Naive thymus-derived CD4-positive, alpha-beta T cell (primary cell): ENCODE measurements at regions of chr20 and their contacts with region 1.

Region 1: GRCh38 chr20:37534401-37535157 is 6.9 kb upstream of the BLCAP start:
- DNase-seq: peak in 7 of 9 donors; percentile 37 to 63 (median 55)
- ATAC-seq: peak; percentile 96
- H3K4me3 ChIP-seq: no peak overlapping the region
- H3K4me3 Mint-ChIP-seq: no peak overlapping the region
- H3K27ac ChIP-seq: no peak overlapping the region
- H3K27ac Mint-ChIP-seq: peak overlapping the region in 1 of 9 donors; percentile 5
- H3K4me1 ChIP-seq: no peaks in the 10 kb centered on the region
- H3K4me1 Mint-ChIP-seq: peaks cover 0 to 6% (median 0%) of the 10 kb centered on the region in 7 donors
- H3K27me3 ChIP-seq: no peaks in the 10 kb centered on the region
- H3K27me3 Mint-ChIP-seq: peaks cover 0 to 9% (median 6%) of the 10 kb centered on the region in 5 donors

Region 2: DNA sequence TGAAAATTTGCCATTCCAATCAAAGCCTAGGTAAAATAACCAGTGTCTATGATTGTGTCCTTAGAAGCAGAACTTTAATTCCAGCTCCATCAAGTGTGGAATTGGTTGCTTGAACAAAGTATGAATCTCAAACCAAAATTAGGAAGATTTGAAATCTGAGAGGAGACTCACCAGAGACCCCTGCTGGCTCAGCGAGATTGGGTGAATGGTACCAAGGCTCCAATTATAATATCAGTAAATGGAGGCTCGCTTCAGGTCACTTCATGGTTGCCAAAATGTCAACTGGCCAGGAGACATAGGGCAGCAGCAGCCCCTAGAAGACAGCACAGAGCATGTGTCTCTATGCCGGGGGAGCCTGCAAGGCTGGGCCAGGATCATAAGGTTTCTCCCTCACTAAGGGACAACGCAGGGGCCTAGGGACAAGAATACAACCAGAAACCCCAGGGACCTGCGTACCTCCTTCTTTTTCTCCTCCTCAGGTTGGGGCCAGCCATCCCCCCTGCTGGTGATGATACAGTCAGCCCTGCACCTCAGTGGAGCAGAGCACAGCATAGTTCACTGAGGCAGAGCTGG is 452.8 kb before region 1 on chr20:
- CTCF ChIA-PET with region 1: no interaction called
- POLR2A ChIA-PET with region 1: no interaction called
- intact Hi-C with region 1: loop called in 1 of 2 experiments (anchors 5 kb)
- DNase-seq: peak in 7 of 9 donors; percentile 21 to 64 (median 54)
- ATAC-seq: peak; percentile 61
- H3K4me3 ChIP-seq: no peak overlapping the region
- H3K4me3 Mint-ChIP-seq: peak overlapping the region in 3 of 10 donors; percentile 5 to 42 (median 17)
- H3K27ac ChIP-seq: no peak overlapping the region
- H3K27ac Mint-ChIP-seq: peak overlapping the region; percentile 62 to 89 (median 82)
- H3K4me1 ChIP-seq: peaks cover 12% of the 10 kb centered on the region in 2 donors
- H3K4me1 Mint-ChIP-seq: peaks cover 2 to 37% (median 29%) of the 10 kb centered on the region in 7 donors
- H3K27me3 ChIP-seq: no peaks in the 10 kb centered on the region
- H3K27me3 Mint-ChIP-seq: no peaks in the 10 kb centered on the region

Region 3: GRCh38 chr20:37192137-37192854 is 342.3 kb before region 1 on chr20:
- CTCF ChIA-PET with region 1: interaction called, 42 read pairs
- POLR2A ChIA-PET with region 1: interaction called, 8 read pairs
- intact Hi-C with region 1: loop called (anchors 1 kb)
- DNase-seq: peak; percentile 31 to 71 (median 60)
- ATAC-seq: peak; percentile 89
- H3K4me3 ChIP-seq: no peak overlapping the region
- H3K4me3 Mint-ChIP-seq: peak overlapping the region in 3 of 10 donors; percentile 7 to 44 (median 13)
- H3K27ac ChIP-seq: no peak overlapping the region
- H3K27ac Mint-ChIP-seq: peak overlapping the region in 8 of 9 donors; percentile 36 to 94 (median 66)
- H3K4me1 ChIP-seq: peaks cover 36 to 46% of the 10 kb centered on the region in 2 donors
- H3K4me1 Mint-ChIP-seq: peaks cover 64 to 84% (median 80%) of the 10 kb centered on the region in 7 donors
- H3K27me3 ChIP-seq: no peaks in the 10 kb centered on the region
- H3K27me3 Mint-ChIP-seq: no peaks in the 10 kb centered on the region

Region 4: DNA sequence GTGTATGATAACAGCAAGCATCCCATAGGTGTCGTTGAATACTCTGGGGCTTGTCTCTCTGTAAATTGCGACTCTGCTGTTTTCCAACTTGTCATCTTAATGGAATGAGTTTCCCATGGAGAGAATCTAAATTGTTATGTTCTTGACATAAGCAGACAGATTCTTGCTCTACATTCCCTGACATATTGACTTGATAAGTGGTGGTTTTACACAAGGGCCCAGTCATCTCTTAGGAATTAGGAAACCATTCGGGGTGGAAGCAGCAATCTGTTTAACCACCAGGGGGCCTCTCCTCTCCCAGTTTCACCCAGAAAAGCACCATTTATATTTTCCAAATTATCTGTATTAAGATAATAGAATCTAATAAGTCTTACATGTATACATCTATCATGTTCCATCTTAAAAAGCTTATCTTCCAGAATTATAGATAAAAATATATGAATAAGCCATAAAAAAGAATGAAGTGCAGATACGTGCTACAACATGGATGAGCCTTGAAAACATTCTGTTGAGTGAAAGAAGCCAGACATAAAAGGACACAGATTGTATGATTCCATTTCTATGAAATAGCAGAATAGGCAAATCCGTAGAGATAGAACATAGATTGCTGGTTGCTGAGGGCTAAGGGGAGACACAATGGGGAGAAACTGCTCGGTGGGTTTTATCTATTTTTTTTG is 332.2 kb before region 1 on chr20:
- CTCF ChIA-PET with region 1: interaction called, 35 read pairs
- POLR2A ChIA-PET with region 1: interaction called, 3 read pairs
- intact Hi-C with region 1: loop called (anchors 1 kb)
- DNase-seq: peak in 4 of 9 donors; percentile 8 to 22 (median 19)
- ATAC-seq: no peak
- H3K4me3 ChIP-seq: no peak overlapping the region
- H3K4me3 Mint-ChIP-seq: no peak overlapping the region
- H3K27ac ChIP-seq: no peak overlapping the region
- H3K27ac Mint-ChIP-seq: peak overlapping the region in 1 of 9 donors; percentile 66
- H3K4me1 ChIP-seq: no peaks in the 10 kb centered on the region
- H3K4me1 Mint-ChIP-seq: peaks cover under 1 to 19% (median 12%) of the 10 kb centered on the region in 7 donors
- H3K27me3 ChIP-seq: no peaks in the 10 kb centered on the region
- H3K27me3 Mint-ChIP-seq: no peaks in the 10 kb centered on the region

Region 5: DNA sequence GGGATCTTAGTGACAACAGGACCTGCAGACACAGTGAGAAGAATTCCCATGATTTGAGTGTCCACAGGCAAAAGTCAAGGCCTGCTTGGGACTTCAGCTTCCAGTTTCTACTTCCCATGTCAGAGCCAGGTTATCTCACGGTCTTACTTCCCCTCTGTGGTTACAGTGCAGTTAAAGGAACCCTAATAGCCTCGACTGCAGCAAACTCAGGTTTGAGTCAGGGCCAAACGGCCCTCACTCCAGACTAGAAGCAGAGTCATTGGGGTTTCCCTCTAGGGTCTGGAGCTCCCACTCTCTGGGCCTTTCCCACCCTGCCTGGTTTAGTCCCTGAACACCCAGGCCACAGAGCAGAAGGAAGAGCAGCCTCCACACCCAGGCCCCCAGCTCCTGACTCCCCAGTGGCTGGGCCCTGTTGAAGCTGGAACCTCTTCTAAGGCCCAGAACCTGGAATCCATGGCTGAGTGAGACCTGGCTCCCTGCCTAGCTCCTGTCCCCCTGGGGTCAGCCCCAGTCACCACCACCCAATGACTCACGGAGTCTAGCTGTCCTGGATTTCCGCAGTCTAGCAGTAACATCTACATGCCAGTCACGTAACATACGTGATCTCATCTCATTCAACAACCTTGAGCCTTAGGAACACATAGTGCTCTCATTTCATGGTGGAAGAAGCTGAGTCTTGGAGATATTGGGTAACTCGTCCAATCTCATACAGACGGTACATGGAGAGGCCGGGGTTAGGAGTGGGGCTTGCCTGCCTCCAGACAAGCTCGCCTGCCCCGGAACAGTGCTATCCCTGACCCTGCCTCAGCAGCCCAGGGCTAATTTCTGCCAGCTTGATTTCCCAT is 263.8 kb before region 1 on chr20:
- CTCF ChIA-PET with region 1: interaction called, 16 read pairs
- POLR2A ChIA-PET with region 1: no interaction called
- intact Hi-C with region 1: loop called in 1 of 2 experiments (anchors 1 kb)
- DNase-seq: no peak
- ATAC-seq: peak; percentile 86
- H3K4me3 ChIP-seq: no peak overlapping the region
- H3K4me3 Mint-ChIP-seq: no peak overlapping the region
- H3K27ac ChIP-seq: no peak overlapping the region
- H3K27ac Mint-ChIP-seq: no peak overlapping the region
- H3K4me1 ChIP-seq: no peaks in the 10 kb centered on the region
- H3K4me1 Mint-ChIP-seq: peaks cover 0 to 4% (median 0%) of the 10 kb centered on the region in 7 donors
- H3K27me3 ChIP-seq: no peaks in the 10 kb centered on the region
- H3K27me3 Mint-ChIP-seq: peaks cover 0 to 4% (median 0%) of the 10 kb centered on the region in 5 donors

Region 6: DNA sequence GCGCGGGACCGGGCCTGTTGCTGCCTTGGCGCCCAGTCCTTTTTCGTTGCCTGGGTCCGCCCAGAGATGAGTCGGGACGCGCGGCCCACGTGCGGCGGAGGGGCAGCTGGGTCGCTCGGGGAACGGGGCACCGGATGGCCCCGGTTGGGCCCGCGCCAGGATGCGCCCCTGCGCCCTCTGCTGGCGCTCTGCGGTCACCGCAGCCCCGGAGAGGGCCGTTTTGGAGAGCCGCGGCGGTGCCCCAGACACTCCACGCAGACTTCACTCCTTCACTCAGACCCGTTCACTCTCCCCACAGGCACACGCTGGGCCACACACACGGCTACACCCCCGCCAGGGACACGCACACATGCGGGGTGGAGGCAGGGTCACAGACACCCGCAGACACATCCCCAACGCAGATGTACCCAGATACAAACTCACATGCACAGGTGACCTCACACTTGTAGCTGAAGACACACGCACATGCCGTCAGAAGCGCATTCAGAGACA is 149.8 kb before region 1 on chr20:
- CTCF ChIA-PET with region 1: interaction called, 4 read pairs
- POLR2A ChIA-PET with region 1: no interaction called
- intact Hi-C with region 1: loop called (anchors 1 to 5 kb)
- DNase-seq: peak; percentile 55 to 89 (median 77)
- ATAC-seq: peak; percentile 96
- H3K4me3 ChIP-seq: peak overlapping the region; percentile 28
- H3K4me3 Mint-ChIP-seq: peak overlapping the region; percentile 75 to 94 (median 84)
- H3K27ac ChIP-seq: peak overlapping the region; percentile 8
- H3K27ac Mint-ChIP-seq: peak overlapping the region in 6 of 9 donors; percentile 8 to 85 (median 56)
- H3K4me1 ChIP-seq: peaks cover 4 to 5% of the 10 kb centered on the region in 2 donors
- H3K4me1 Mint-ChIP-seq: peaks cover 4 to 13% (median 6%) of the 10 kb centered on the region in 7 donors
- H3K27me3 ChIP-seq: no peaks in the 10 kb centered on the region
- H3K27me3 Mint-ChIP-seq: peaks cover 0 to 7% (median 0%) of the 10 kb centered on the region in 5 donors

Region 7: GRCh38 chr20:37392421-37393178 is 142.0 kb before region 1 on chr20:
- CTCF ChIA-PET with region 1: no interaction called
- POLR2A ChIA-PET with region 1: no interaction called
- intact Hi-C with region 1: loop called in 1 of 2 experiments (anchors 1 kb)
- DNase-seq: no peak
- ATAC-seq: no peak
- H3K4me3 ChIP-seq: no peak overlapping the region
- H3K4me3 Mint-ChIP-seq: no peak overlapping the region
- H3K27ac ChIP-seq: no peak overlapping the region
- H3K27ac Mint-ChIP-seq: no peak overlapping the region
- H3K4me1 ChIP-seq: no peaks in the 10 kb centered on the region
- H3K4me1 Mint-ChIP-seq: peaks cover 0 to 2% (median 0%) of the 10 kb centered on the region in 7 donors
- H3K27me3 ChIP-seq: no peaks in the 10 kb centered on the region
- H3K27me3 Mint-ChIP-seq: no peaks in the 10 kb centered on the region

Region 8: DNA sequence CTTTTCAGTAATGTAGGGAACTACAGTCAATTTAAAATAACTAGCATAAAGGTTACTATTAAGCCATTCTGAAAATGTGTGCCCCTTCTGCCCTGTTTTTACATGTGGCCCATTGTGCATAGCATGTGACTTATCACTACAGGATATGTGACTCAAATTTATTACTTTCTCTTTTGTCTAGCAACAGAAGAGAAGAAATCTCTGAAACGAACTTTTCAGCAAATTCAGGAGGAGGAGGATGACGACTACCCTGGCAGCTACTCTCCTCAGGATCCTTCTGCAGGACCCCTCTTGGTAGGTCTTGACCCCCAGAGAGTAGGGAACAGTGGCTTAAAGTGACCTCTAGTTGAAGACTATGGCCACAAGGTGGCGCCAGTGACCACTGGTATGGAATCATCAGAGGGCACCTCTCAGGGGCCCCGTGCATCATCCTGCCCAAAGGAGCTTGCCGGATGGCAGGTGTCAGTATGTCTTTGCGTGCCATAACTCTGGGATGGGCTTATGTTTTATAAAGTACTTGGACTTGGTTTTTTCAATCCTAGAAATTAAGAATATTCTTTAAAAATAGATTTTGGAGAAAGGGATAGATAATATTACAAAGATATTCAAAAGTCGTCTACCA is 522.9 kb after region 1 on chr20:
- CTCF ChIA-PET with region 1: no interaction called
- POLR2A ChIA-PET with region 1: no interaction called
- intact Hi-C with region 1: no loop called
- DNase-seq: peak; percentile 33 to 69 (median 60)
- ATAC-seq: peak; percentile 98
- H3K4me3 ChIP-seq: no peak overlapping the region
- H3K4me3 Mint-ChIP-seq: peak overlapping the region in 1 of 10 donors; percentile 52
- H3K27ac ChIP-seq: no peak overlapping the region
- H3K27ac Mint-ChIP-seq: peak overlapping the region in 8 of 9 donors; percentile 14 to 82 (median 30)
- H3K4me1 ChIP-seq: no peaks in the 10 kb centered on the region
- H3K4me1 Mint-ChIP-seq: peaks cover 5 to 37% (median 31%) of the 10 kb centered on the region in 7 donors
- H3K27me3 ChIP-seq: no peaks in the 10 kb centered on the region
- H3K27me3 Mint-ChIP-seq: no peaks in the 10 kb centered on the region